ENCODE measurements at regions of chr3 and their contacts with region 1.

Region 1: DNA sequence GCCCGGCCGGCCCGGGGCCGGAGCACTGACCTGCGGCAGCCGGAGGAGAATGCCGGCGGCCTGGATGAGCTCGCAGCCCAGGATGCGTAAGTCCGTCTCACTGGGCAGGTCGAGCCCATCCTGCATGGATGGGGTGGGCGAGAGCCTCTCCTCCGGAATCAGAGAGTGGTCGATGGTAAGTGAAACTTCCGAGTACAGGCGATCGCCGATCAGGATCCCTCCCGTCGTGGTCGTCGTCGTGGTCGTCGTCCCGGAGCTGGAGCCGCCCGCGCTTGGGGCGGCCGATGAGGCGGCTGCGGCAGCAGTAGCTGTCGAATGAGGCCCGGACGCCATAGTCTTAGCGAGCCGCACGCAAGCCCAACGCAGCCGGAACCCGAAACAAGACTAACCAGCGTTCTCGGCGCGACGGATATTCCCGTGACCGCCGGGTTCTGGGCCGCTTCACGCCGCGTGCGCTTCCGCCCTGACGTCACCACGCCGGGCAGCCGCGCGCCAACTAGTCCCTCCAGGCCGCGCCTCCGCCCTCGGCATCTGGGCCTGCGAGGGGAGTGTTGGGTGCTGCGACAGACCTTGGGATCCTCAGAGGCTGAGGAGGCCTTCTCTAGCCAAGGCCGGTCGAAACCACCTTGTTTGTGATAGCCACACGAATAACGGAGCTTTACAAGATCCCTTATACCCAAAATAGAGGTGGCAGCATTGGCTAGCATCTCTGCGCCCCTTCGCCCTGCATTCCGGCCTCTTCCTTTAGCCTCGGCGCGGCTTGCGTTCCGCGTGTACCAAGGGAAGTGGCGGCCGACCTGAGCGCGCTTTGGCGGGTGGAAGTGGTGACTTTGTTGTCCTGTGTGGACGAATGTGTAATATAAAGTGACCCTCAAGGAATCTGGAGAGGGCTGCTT is at the start of gene CCNL1:
- DNase-seq: peak; percentile 95
- H3K4me3 Mint-ChIP-seq: peak within 1 kb of the TSS; percentile 93
- H3K27ac Mint-ChIP-seq: peak within 1 kb of the TSS; percentile 94
- H3K4me1 Mint-ChIP-seq: peaks cover 64% of the 10 kb centered on the region
- H3K27me3 Mint-ChIP-seq: no peaks in the 10 kb centered on the region
- total RNA-seq, gene CCNL1: 167 and 204 TPM in 2 replicates

Region 2: GRCh38 chr3:155870133-155870944 is 1289.7 kb before region 1 on chr3 and contains the start of gene GMPS:
- intact Hi-C with region 1: loop called (anchors 5 kb)
- DNase-seq: peak; percentile 98
- H3K4me3 Mint-ChIP-seq: peak within 1 kb of the TSS; percentile 98
- H3K27ac Mint-ChIP-seq: peak within 1 kb of the TSS; percentile 96
- H3K4me1 Mint-ChIP-seq: peaks cover 23% of the 10 kb centered on the region
- H3K27me3 Mint-ChIP-seq: no peaks in the 10 kb centered on the region
- total RNA-seq, gene GMPS: 131 and 144 TPM in 2 replicates

Region 3: GRCh38 chr3:157104928-157105652 is 54.9 kb before region 1 on chr3:
- intact Hi-C with region 1: no loop called
- DNase-seq: no peak
- H3K4me3 Mint-ChIP-seq: no peak overlapping the region
- H3K27ac Mint-ChIP-seq: peak overlapping the region; percentile 65
- H3K4me1 Mint-ChIP-seq: peaks cover 54% of the 10 kb centered on the region
- H3K27me3 Mint-ChIP-seq: no peaks in the 10 kb centered on the region

Region 4: GRCh38 chr3:157130467-157131251 is 29.4 kb before region 1 on chr3:
- intact Hi-C with region 1: loop called (anchors 1 kb)
- DNase-seq: peak; percentile 72
- H3K4me3 Mint-ChIP-seq: peak overlapping the region; percentile 59
- H3K27ac Mint-ChIP-seq: peak overlapping the region; percentile 90
- H3K4me1 Mint-ChIP-seq: peaks cover 84% of the 10 kb centered on the region
- H3K27me3 Mint-ChIP-seq: no peaks in the 10 kb centered on the region

Region 5: DNA sequence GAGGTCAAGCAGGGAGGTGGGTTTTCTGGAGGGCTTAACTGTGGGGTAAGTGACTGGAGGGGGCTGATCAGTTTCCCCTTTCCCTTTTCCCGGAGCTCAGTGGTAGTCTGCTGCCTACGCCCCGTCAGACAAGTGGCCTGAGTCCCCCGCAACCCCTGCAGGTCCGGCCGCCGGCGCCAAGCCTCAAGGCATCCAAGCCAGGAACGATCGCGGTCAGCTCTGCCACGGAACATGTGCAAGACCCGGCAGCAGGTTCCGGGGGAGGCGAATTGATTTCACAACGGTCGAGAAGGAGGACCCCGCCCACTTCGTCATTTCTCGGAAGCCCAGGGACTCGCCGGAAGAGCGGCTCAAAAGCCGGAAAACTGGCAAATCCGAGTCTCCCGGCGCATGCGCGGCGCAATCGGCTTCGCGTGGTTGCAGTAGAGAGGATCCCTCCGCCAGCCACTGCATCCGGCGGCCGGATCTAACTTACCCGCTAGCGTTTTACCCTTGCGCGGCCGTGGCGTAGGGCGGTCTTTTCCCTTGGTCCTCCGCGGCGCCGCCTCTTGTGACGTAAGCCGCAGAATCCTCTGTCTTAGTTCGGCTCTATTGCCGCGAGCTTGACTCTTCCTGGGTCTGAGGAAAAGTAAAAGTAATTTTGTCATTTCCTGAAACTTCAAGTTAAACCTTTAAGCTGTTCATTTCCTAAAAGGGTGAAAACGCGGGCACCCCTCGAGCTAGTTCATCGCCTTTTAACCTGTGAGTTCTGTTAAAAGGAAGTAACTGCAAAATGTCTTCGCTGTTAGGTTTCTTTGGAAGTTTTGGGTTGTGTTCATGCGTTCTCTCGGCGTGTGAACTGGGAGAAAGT is 14.9 kb after region 1 on chr3:
- intact Hi-C with region 1: loop called (anchors 1 kb)
- DNase-seq: peak; percentile 98
- H3K4me3 Mint-ChIP-seq: peak overlapping the region; percentile 94
- H3K27ac Mint-ChIP-seq: peak overlapping the region; percentile 96
- H3K4me1 Mint-ChIP-seq: peaks cover 47% of the 10 kb centered on the region
- H3K27me3 Mint-ChIP-seq: peaks cover 2% of the 10 kb centered on the region

Region 6: DNA sequence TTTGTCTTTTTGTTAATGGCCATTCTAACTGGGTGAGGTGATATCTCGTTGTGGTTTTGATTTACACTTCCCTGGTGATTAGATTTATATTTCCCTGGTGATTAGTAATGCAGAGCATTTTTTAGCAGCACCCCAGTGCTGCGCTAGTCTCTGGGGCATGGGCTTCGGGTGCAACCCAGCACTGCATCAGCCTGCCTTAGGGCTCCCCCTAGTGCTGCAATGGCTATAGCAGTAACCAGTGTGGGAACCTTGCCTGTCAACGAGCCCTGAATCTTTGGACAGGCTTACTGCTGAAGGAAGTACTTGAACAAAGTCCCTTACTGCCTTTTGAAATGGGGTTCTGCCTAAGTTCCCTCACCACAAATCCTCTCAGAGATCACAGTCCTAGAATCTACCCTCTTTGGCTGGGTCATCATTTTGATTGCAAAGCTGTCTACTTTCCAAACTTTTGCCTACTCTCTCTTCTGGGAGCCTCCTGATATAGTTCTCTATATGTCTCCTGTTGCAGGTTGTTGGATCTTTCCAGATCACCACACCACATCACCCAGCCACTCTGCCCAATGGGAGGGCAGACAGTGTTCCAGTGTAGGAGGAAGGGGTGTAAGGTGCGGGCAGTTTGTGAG is 79.2 kb after region 1 on chr3:
- intact Hi-C with region 1: loop called (anchors 1 kb)
- DNase-seq: peak; percentile 54
- H3K4me3 Mint-ChIP-seq: no peak overlapping the region
- H3K27ac Mint-ChIP-seq: no peak overlapping the region
- H3K4me1 Mint-ChIP-seq: peaks cover 6% of the 10 kb centered on the region
- H3K27me3 Mint-ChIP-seq: peaks cover 6% of the 10 kb centered on the region

Region 7: DNA sequence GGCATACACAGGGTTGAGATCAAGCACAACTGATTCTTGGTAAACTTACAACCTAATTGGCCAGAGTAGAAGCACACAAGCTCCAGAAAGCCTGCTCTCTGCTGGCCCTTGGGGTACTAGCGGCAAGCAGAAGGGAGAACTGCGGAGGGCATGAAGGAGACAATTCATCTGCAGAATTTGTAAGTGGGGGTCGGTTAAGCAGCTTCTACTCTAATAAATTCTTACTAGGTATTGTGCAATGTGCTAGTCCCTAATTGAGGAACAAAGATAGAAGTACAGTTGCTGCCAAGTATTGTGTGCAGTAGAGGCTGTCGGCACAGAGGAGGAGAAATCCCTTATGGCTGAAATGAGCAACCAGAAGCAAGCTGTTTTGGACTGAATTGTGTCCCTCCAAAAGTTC is 434.4 kb after region 1 on chr3:
- intact Hi-C with region 1: no loop called
- DNase-seq: no peak
- H3K4me3 Mint-ChIP-seq: no peak overlapping the region
- H3K27ac Mint-ChIP-seq: no peak overlapping the region
- H3K4me1 Mint-ChIP-seq: no peaks in the 10 kb centered on the region
- H3K27me3 Mint-ChIP-seq: peaks cover 13% of the 10 kb centered on the region